Breast epithelium (tissue), 4 donors: ENCODE measurements at regions of chr2 and their contacts with region 1.

Region 1: GRCh38 chr2:128314348-128315121 is 4.1 kb downstream of the HS6ST1 start:
- DNase-seq: peak; percentile 14 to 63
- H3K4me3 ChIP-seq: peak overlapping the region in 2 of 3 donors; percentile 85 to 98
- H3K27ac ChIP-seq: no peak overlapping the region
- H3K4me1 ChIP-seq: peaks cover 14 to 27% of the 10 kb centered on the region in 2 donors
- H3K27me3 ChIP-seq: no peaks in the 10 kb centered on the region
- CTCF ChIP-seq: no peak
- POLR2A ChIP-seq: no peak

Region 2: GRCh38 chr2:128214866-128215460 is 99.6 kb before region 1 on chr2:
- intact Hi-C with region 1: no loop called
- DNase-seq: no peak
- H3K4me3 ChIP-seq: no peak overlapping the region
- H3K27ac ChIP-seq: no peak overlapping the region
- H3K4me1 ChIP-seq: no peaks in the 10 kb centered on the region
- H3K27me3 ChIP-seq: no peaks in the 10 kb centered on the region
- CTCF ChIP-seq: no peak
- POLR2A ChIP-seq: no peak

Region 3: DNA sequence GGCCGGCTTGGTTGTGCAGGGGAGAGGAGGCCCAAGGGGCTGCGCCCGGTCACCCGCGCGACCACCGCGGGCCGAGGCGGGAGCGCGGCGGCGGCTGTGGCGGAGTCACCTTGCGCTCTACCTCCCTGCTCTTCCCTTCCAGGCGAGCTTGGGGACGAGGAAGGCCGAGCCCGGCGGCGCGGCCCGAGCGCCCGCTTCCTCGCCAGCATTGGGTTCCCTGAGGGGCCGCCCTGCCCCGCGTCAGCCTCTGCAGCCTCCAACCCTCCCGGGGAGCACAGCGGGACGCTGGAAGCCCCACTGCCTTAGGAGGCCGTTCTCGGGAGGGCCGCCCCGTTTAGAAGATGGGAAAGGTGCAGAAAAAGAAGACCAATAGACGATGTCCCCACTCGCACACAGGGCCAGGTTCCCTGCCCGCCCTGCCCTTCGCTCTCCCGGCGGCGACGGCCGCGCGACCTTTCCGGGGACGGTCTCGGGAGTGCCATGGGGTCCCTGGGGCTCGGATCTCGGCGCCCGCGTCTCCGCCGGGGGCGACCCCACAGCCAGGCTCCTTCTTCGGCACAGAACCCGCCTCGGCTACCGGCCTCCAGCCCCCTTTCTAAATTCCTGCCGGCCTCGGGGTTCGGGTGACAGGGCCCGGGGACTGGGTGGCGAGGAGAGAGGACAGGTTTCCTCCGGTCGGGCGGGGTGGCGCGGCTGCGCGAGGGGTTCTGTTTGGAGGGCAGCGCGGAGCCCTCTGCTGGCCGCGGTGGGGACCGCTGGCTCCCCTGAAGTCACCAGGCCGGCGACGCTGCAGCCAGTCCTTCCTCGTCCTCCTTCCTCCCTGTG is 81.4 kb before region 1 on chr2:
- intact Hi-C with region 1: loop called (anchors 1 kb)
- DNase-seq: peak; percentile 65 to 85
- H3K4me3 ChIP-seq: peak overlapping the region; percentile 65 to 71 (median 70)
- H3K27ac ChIP-seq: peak overlapping the region; percentile 66 to 79
- H3K4me1 ChIP-seq: no peaks in the 10 kb centered on the region
- H3K27me3 ChIP-seq: no peaks in the 10 kb centered on the region
- CTCF ChIP-seq: peak; percentile 78 to 81 (median 80)
- POLR2A ChIP-seq: no peak